ENCODE measurements at regions of chr7 and their contacts with region 1.

Region 1: GRCh38 chr7:114830952-114831351 is 90.9 kb upstream of the MDFIC start:
- DNase-seq: no peak
- H3K4me3 ChIP-seq: no peak overlapping the region
- H3K4me3 Mint-ChIP-seq: no peak overlapping the region
- H3K27ac Mint-ChIP-seq: peak overlapping the region; percentile 42
- H3K4me1 ChIP-seq: peaks cover 12% of the 10 kb centered on the region
- H3K4me1 Mint-ChIP-seq: peaks cover 13% of the 10 kb centered on the region
- H3K27me3 ChIP-seq: no peaks in the 10 kb centered on the region
- H3K27me3 Mint-ChIP-seq: no peaks in the 10 kb centered on the region
- CTCF ChIP-seq: no peak

Region 2: GRCh38 chr7:114588506-114588905 is 242.4 kb before region 1 on chr7:
- CTCF ChIA-PET with region 1: no interaction called
- POLR2A ChIA-PET with region 1: no interaction called
- intact Hi-C with region 1: no loop called
- DNase-seq: no peak
- H3K4me3 ChIP-seq: no peak overlapping the region
- H3K4me3 Mint-ChIP-seq: no peak overlapping the region
- H3K27ac Mint-ChIP-seq: no peak overlapping the region
- H3K4me1 ChIP-seq: no peaks in the 10 kb centered on the region
- H3K4me1 Mint-ChIP-seq: no peaks in the 10 kb centered on the region
- H3K27me3 ChIP-seq: no peaks in the 10 kb centered on the region
- H3K27me3 Mint-ChIP-seq: no peaks in the 10 kb centered on the region
- CTCF ChIP-seq: no peak

Region 3: GRCh38 chr7:114631249-114631822 is 199.6 kb before region 1 on chr7:
- CTCF ChIA-PET with region 1: no interaction called
- POLR2A ChIA-PET with region 1: no interaction called
- intact Hi-C with region 1: no loop called
- DNase-seq: no peak
- H3K4me3 ChIP-seq: no peak overlapping the region
- H3K4me3 Mint-ChIP-seq: no peak overlapping the region
- H3K27ac Mint-ChIP-seq: no peak overlapping the region
- H3K4me1 ChIP-seq: no peaks in the 10 kb centered on the region
- H3K4me1 Mint-ChIP-seq: no peaks in the 10 kb centered on the region
- H3K27me3 ChIP-seq: no peaks in the 10 kb centered on the region
- H3K27me3 Mint-ChIP-seq: peaks cover 3% of the 10 kb centered on the region
- CTCF ChIP-seq: no peak

Region 4: GRCh38 chr7:114740095-114740494 is 90.9 kb before region 1 on chr7:
- CTCF ChIA-PET with region 1: no interaction called
- POLR2A ChIA-PET with region 1: no interaction called
- intact Hi-C with region 1: no loop called
- DNase-seq: no peak
- H3K4me3 ChIP-seq: no peak overlapping the region
- H3K4me3 Mint-ChIP-seq: no peak overlapping the region
- H3K27ac Mint-ChIP-seq: no peak overlapping the region
- H3K4me1 ChIP-seq: no peaks in the 10 kb centered on the region
- H3K4me1 Mint-ChIP-seq: no peaks in the 10 kb centered on the region
- H3K27me3 ChIP-seq: no peaks in the 10 kb centered on the region
- H3K27me3 Mint-ChIP-seq: peaks cover 2% of the 10 kb centered on the region
- CTCF ChIP-seq: no peak

Region 5: GRCh38 chr7:114856625-114857024 is 25.7 kb after region 1 on chr7:
- CTCF ChIA-PET with region 1: no interaction called
- POLR2A ChIA-PET with region 1: no interaction called
- intact Hi-C with region 1: loop called (anchors 1 kb)
- DNase-seq: peak in 1 of 2 experiments; percentile 5
- H3K4me3 ChIP-seq: no peak overlapping the region
- H3K4me3 Mint-ChIP-seq: no peak overlapping the region
- H3K27ac Mint-ChIP-seq: no peak overlapping the region
- H3K4me1 ChIP-seq: peaks cover 24% of the 10 kb centered on the region
- H3K4me1 Mint-ChIP-seq: peaks cover 4% of the 10 kb centered on the region
- H3K27me3 ChIP-seq: no peaks in the 10 kb centered on the region
- H3K27me3 Mint-ChIP-seq: no peaks in the 10 kb centered on the region
- CTCF ChIP-seq: no peak

Region 6: GRCh38 chr7:114916261-114916892 is 85.4 kb after region 1 on chr7:
- CTCF ChIA-PET with region 1: no interaction called
- POLR2A ChIA-PET with region 1: no interaction called
- intact Hi-C with region 1: no loop called
- DNase-seq: no peak
- H3K4me3 ChIP-seq: no peak overlapping the region
- H3K4me3 Mint-ChIP-seq: no peak overlapping the region
- H3K27ac Mint-ChIP-seq: no peak overlapping the region
- H3K4me1 ChIP-seq: no peaks in the 10 kb centered on the region
- H3K4me1 Mint-ChIP-seq: peaks cover 12% of the 10 kb centered on the region
- H3K27me3 ChIP-seq: no peaks in the 10 kb centered on the region
- H3K27me3 Mint-ChIP-seq: no peaks in the 10 kb centered on the region
- CTCF ChIP-seq: no peak